A673 (cell line): ENCODE measurements at regions of chr15 and their contacts with region 1.

Region 1: DNA sequence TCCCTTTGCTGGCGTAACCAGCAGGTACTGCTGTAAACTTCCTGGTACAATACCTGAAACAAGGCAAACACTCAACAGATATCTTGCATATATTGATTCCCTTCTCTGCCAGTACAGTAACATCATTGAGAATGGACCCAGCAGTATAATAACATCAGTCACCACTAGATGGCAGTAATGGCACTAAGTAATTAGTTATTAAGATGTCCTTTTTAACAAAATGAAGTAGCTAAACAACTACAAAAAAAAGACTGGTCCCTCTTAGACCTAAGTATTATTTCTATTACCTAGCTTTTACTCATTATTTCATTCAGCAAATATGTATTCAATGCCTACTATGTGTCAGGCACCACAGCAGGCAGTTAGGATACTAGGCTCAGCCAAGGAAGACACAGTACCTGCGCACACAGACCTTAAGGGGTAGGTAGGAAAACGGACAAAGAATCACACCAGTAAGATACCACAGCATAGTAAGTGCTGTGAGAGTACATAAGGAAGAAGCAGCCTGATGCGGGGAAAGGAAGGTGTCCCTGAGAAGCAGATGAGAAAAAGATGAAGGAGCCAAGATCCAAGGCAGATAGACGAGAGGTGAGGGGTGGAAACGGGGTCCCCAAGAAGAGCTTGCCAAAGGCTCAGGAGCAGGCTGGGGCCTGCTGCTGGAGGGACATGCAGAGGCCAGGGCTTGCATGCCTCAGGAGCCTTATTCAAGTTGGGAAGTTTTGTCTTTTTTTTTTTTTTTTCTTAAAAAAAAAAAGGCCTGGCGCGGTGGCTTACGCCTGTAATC is 102.8 kb upstream of the CHD2 start:
- DNase-seq: peak; percentile 85
- H3K4me3 ChIP-seq: no peak overlapping the region
- H3K27ac ChIP-seq: no peak overlapping the region
- H3K4me1 ChIP-seq: peaks cover 3% of the 10 kb centered on the region
- H3K27me3 ChIP-seq: no peaks in the 10 kb centered on the region
- CTCF ChIP-seq: peak; percentile 74

Region 2: DNA sequence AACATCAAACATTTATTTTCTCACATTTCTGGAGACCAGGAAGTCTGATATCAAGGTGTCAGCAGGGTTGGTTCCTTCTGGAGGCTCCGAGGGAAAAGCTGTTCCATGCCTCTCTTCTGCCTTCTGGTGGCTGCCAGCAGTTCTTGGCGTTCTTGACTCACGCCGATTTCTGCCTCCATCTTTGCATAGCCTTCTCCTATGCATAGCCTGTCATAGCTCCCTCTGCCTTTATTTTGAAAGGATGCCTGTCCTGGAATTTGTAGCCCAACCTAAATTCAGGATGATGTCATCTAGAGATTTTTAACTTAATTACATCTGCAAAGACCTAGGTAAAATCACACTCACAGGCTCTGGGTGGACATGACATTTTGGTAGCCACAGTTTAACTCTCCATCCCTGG is 221.2 kb after region 1 on chr15:
- CTCF ChIA-PET with region 1: interaction called, 5 read pairs
- POLR2A ChIA-PET with region 1: no interaction called
- intact Hi-C with region 1: loop called (anchors 2 kb)
- DNase-seq: peak; percentile 33
- H3K4me3 ChIP-seq: no peak overlapping the region
- H3K27ac ChIP-seq: no peak overlapping the region
- H3K4me1 ChIP-seq: no peaks in the 10 kb centered on the region
- H3K27me3 ChIP-seq: no peaks in the 10 kb centered on the region
- CTCF ChIP-seq: peak; percentile 38

Region 3: DNA sequence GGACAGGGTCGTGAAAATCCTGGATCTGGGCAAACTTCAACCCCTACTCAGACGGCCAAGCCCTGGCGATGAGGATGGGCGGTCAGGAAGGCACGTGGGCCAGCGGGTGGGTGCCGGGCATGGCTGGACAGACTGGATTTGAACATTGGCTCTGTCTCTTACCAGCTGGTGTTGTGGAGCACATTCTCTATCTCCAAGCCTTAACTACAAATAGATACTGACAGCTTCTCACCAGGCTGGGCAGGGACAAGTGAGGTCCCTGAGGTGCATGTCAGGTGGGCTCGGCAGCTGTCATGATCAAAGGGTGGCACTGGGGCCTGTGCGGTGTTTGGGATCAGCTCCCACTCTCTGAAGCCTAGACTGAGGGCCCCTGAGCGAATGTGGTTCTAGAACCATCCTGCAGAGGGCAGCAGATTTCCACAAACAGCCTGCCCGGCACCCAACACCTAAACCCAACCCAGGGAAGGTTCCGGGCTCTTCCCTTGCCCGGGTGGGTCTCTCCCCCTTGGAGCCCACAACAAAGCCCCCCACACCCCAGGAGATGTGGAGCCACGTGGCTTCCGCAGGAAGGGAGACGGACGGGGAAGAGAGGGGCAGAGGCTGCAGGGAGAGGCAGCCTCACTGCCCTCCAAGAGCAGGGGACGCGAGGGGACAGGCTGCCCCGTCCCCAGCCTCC is 233.2 kb after region 1 on chr15:
- CTCF ChIA-PET with region 1: interaction called, 12 read pairs
- POLR2A ChIA-PET with region 1: no interaction called
- intact Hi-C with region 1: no loop called
- DNase-seq: peak; percentile 79
- H3K4me3 ChIP-seq: no peak overlapping the region
- H3K27ac ChIP-seq: no peak overlapping the region
- H3K4me1 ChIP-seq: peaks cover 37% of the 10 kb centered on the region
- H3K27me3 ChIP-seq: no peaks in the 10 kb centered on the region
- CTCF ChIP-seq: peak; percentile 90